Gastrocnemius medialis (tissue), 4 donors: ENCODE measurements at regions of chr20 and their contacts with region 1.

Region 1: DNA sequence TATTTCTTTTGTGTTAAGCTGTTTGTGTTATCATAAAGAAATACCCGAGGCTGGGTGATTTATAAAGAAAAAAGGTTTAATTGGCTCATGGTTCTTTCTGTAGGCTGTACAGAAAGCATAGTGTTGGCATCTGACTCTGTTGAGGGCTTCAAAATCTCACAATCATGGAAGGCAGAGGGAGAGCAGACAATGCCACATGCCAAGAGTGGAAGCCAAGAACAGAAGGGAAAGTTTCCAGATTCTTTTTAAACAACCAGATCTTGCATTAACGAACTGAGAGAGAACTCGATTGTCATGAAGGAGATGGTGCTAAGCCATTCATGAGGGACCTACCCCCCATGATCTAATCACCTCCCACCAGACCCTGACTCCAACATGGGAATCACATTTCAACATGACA is 290.1 kb downstream of the BMP2 start:
- DNase-seq: no peak
- ATAC-seq: no peak
- H3K4me3 ChIP-seq: no peak overlapping the region
- H3K27ac ChIP-seq: no peak overlapping the region
- H3K4me1 ChIP-seq: no peaks in the 10 kb centered on the region
- H3K27me3 ChIP-seq: no peaks in the 10 kb centered on the region
- CTCF ChIP-seq: no peak
- POLR2A ChIP-seq: no peak

Region 2: DNA sequence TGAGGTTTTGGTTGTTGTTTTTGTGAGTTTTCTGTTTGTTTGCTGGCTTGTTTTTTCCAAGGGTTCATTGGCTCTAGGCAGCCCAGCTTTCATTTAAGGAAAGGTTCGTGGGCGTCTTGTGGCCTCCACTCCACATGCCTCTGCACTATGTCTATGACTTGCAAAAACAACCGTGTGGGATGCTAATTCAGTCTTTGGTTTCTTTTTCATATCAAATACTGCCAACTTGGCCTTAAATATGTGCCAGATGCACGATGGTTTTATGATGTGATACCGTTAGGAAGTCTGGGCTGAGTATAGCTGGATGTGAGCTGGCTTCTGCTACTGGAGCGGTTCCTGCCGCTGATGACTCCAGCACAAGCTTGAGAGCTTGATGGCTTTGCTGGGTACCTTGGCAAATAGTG is 193.8 kb before region 1 on chr20:
- in situ Hi-C with region 1: no loop called
- intact Hi-C with region 1: no loop called
- DNase-seq: no peak
- ATAC-seq: no peak
- H3K4me3 ChIP-seq: no peak overlapping the region
- H3K27ac ChIP-seq: no peak overlapping the region
- H3K4me1 ChIP-seq: no peaks in the 10 kb centered on the region
- H3K27me3 ChIP-seq: no peaks in the 10 kb centered on the region
- CTCF ChIP-seq: no peak
- POLR2A ChIP-seq: no peak

Region 3: DNA sequence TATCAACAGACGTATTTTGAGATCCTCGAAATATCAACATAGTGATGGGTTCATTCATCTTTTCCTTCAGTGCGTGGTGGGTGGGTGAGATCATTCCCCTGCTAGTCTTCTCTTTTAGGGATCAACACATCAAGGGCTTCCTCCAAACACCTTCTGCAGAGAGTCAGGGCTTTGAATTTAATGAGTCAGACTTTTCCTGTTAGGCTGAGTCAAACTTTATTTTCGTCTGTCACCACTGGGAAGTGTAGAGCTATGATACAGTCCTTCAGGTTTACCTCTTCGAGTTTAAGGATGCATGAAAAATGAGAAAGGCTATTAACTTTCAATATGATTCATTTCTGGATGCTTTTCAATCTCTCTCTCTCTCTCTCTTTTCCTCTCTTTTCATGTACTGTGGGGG is 101.0 kb before region 1 on chr20:
- in situ Hi-C with region 1: loop called in 1 of 4 experiments (anchors 25 kb)
- intact Hi-C with region 1: no loop called
- DNase-seq: no peak
- ATAC-seq: no peak
- H3K4me3 ChIP-seq: no peak overlapping the region
- H3K27ac ChIP-seq: no peak overlapping the region
- H3K4me1 ChIP-seq: no peaks in the 10 kb centered on the region
- H3K27me3 ChIP-seq: no peaks in the 10 kb centered on the region
- CTCF ChIP-seq: no peak
- POLR2A ChIP-seq: no peak